Posterior vena cava (tissue), 2 donors: ENCODE measurements at regions of chr4 and their contacts with region 1.

Region 1: GRCh38 chr4:124202099-124202498 is 510.4 kb downstream of the ANKRD50 start:
- DNase-seq: no peak

Region 2: GRCh38 chr4:124000233-124000632 is 201.9 kb before region 1 on chr4:
- intact Hi-C with region 1: loop called in 1 of 2 experiments (anchors 5 kb)
- DNase-seq: no peak